ENCODE measurements at regions of chr6 and their contacts with region 1.

Region 1: DNA sequence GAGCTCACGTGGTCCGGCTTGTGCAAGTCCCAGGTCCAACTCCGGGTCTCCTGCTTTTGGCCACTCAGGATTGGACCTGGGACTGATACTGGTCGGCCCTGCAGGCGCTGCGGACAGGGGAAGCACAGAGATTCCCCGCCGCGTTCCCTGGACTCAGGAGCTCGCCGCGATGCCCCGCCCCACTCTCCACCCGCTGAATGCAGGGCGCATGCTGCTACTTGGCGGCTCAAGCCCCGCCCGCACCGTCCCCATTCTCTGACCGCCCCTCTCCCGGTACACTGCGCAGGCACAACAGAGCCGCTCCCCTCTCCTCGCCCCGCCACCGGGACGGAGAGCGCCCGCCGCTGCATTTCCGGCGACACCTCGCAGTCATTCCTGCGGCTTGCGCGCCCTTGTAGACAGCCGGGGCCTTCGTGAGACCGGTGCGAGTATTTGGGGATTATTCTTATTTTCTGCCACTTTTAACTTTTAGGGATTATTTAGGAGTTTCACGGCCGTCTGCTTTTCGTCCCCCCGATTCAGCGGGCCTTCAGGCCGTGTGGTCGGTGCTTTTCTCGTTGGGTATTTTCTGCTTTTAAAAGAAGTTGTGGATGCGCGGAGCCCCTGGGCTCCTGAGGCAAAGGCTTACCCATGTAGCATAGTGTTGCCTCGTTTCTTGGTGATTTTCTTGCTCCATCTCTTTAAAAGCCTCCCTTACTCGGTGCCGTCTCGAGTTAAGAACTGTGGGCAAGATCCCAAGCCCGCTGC is at the start of gene TMEM14C:
- DNase-seq: peak; percentile 48 to 83 (median 64)
- ATAC-seq: peak; percentile 69 to 81
- H3K4me3 Mint-ChIP-seq: peak within 1 kb of the TSS; percentile 90 to 99 (median 96)
- H3K27ac Mint-ChIP-seq: peak within 1 kb of the TSS; percentile 91 to 97 (median 94)
- H3K4me1 Mint-ChIP-seq: peaks cover 25 to 79% (median 68%) of the 10 kb centered on the region in 4 donors
- H3K27me3 Mint-ChIP-seq: no peaks in the 10 kb centered on the region
- polyA plus RNA-seq, gene TMEM14C: 95.9 to 205 (median 135) TPM

Region 2: DNA sequence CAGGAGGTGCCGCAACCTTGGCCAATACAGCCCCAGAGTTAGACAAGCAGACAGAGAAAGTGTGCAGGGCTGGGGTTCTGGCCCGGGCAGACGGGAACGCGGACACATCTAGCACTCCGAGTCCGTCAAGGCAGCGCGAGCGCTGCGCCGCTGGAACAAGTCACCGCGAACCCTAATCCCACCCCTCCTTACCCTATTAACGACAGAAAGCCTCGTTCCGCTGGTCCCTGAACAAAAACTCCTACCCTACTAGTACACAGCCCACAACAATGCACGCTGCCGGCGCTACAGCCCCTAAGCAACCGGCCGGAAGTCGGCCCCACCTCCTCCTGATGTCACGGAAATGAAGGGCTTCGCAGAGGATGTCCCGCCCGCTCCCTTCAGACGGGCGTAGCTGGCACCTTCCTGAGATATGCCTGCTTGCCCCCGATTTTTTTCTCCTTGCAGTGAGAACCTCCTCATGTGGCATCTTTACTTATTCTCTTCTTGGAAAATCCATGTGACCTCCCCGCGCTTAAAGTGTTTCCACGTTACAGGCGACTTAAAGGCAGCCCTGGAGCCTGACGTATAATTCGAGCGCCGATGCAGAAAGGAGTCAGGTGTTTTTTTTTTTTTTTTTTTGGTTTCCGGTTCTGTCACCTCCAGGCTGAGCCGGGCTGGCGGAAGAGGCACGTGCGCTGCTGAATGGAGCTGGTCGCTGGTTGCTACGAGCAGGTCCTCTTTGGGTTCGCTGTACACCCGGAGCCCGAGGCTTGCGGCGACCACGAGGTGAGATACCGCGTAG is 28.5 kb before region 1 on chr6 and contains the starts of genes C6orf52 and PAK1IP1:
- POLR2A ChIA-PET with region 1: interaction called, 77 read pairs
- DNase-seq: peak; percentile 80 to 99 (median 94)
- ATAC-seq: peak; percentile 92 to 93
- H3K4me3 Mint-ChIP-seq: peak within 1 kb of the TSS; percentile 93 to 100 (median 98)
- H3K27ac Mint-ChIP-seq: peak within 1 kb of the TSS; percentile 100
- H3K4me1 Mint-ChIP-seq: peaks cover 14 to 50% (median 47%) of the 10 kb centered on the region in 4 donors
- H3K27me3 Mint-ChIP-seq: peaks cover 0 to 6% (median 0%) of the 10 kb centered on the region in 5 donors
- polyA plus RNA-seq, gene C6orf52: 0.60 to 1.0 TPM in 2 of 3 donors, not detected in the other
- polyA plus RNA-seq, gene PAK1IP1: 17.6 to 26.9 (median 22.4) TPM

Region 3: DNA sequence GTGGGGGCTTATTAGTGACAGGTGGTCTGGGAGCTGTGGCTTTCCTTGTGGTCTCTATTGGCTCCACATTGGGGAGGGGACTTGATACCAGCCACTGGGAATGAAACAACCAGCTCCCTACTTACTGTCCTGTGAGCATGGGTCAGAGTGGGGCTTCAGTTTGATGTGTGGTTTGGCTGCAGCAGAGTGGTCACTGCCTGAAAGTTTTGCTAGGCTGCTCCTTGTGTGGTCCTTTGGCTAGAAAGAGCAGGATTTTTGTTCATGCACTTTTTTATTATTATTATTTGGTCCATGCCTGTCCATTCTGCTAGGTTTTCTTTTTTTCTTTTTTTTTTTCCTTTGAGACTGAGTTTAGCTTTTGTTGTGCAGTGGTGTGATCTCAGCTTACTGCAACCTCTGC is 17.1 kb after region 1 on chr6:
- POLR2A ChIA-PET with region 1: interaction called, 11 read pairs
- DNase-seq: no peak
- ATAC-seq: no peak
- H3K4me3 Mint-ChIP-seq: no peak overlapping the region
- H3K27ac Mint-ChIP-seq: peak overlapping the region in 1 of 10 donors; percentile 4
- H3K4me1 Mint-ChIP-seq: peaks cover 0 to 3% (median under 1%) of the 10 kb centered on the region in 4 donors
- H3K27me3 Mint-ChIP-seq: no peaks in the 10 kb centered on the region

Region 4: DNA sequence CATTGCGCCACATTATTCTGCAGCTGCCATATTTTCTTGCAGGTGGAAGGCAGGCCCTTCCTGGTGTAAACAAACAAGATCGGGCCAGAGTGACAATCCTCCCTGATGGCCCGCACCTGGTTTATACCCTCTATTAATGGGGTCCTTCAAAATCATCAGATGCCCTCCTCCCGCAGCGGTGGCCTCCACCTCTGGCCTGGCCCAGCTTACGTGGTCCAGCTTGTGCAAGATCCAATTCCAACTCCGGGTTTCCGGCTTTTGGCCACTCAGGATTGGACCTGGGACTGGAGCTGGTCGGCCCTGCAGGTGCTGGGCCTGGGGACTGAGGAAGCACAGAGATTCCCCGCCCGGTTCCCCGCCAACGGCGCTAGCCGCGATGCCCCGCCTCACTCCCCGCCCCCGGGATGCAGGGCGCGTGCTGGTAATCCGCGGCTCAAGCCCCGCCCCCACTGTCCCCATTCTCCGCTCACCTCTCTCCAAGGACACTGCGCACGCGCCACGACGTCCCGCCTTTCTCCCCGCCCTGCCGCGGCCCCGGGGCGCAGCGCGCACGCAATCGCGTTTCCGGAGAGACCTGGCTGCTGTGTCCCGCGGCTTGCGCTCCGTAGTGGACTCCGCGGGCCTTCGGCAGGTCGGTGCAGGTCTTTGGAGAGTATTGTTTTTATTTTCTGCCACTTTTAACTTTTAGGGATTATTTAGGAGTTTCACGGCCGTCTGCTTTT is 24.4 kb after region 1 on chr6 and contains the start of gene TMEM14B:
- POLR2A ChIA-PET with region 1: interaction called, 74 read pairs
- DNase-seq: peak; percentile 96 to 100 (median 99)
- ATAC-seq: peak; percentile 95 to 96
- H3K4me3 Mint-ChIP-seq: peak within 1 kb of the TSS; percentile 75 to 99 (median 92)
- H3K27ac Mint-ChIP-seq: peak within 1 kb of the TSS; percentile 96 to 99 (median 98)
- H3K4me1 Mint-ChIP-seq: peaks cover 21 to 64% (median 49%) of the 10 kb centered on the region in 4 donors
- H3K27me3 Mint-ChIP-seq: no peaks in the 10 kb centered on the region
- polyA plus RNA-seq, gene TMEM14B: 194 to 241 (median 212) TPM

Measured in naive thymus-derived CD8-positive, alpha-beta T cell (primary cell).